MCF 10A (cell line): ENCODE measurements at regions of chr1 and their contacts with region 1.

Region 1: DNA sequence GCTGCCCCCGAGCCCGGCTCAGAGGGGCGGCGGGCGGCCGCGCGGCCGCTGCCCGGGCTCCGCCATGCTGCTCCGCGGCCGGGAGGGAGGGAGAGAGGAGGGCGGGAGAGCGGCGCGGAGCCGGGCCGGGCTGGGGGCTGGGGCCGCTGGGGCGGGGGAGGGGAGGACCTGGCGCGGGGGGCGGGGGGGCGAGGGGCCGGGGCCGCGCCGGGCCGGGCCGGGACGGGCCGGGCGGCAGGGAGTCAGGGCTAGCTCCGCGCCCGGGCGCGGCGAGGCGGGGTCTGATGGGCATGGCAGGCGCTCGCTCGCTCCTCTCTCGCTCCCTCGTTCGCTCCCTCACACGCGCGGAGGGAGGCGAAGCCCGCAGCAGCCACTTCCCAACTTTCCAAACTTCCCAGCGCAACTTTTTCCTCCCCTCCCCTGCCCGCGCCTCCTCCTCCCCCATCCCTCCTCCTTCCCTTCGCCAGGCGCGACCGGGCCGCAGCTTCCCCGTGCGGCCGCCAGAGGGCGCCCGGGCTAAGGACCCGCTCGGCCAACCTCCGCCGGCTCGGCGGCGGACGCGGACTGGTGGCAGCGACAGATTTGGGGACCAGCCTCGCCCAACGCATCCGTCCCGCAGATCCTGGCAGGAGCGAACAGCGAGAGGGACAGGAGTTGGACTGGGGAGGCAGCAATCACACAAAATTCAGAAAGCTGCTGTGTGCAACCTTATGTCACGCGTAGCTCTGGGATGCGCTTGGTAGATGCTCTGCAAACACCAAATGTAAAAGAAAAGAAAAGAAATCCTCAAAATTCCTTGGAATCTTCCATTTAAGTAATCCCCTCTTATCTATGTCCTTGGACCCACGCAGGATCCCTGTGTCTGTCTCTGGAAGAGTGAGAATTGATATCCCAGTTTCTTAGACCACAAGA is at the start of gene TRABD2B:
- DNase-seq: peak; percentile 74
- H3K4me3 Mint-ChIP-seq: peak within 1 kb of the TSS; percentile 78
- H3K27ac Mint-ChIP-seq: peak within 1 kb of the TSS; percentile 76
- H3K4me1 Mint-ChIP-seq: peaks cover 33% of the 10 kb centered on the region
- H3K27me3 Mint-ChIP-seq: no peaks in the 10 kb centered on the region
- CTCF ChIP-seq: peak; percentile 85
- total RNA-seq, gene TRABD2B: 0.96 and 2.6 TPM in 2 replicates

Region 2: GRCh38 chr1:47906009-47906432 is 91.5 kb before region 1 on chr1:
- CTCF ChIA-PET with region 1: no interaction called
- POLR2A ChIA-PET with region 1: no interaction called
- intact Hi-C with region 1: loop called (anchors 10 kb)
- DNase-seq: peak; percentile 77
- H3K4me3 Mint-ChIP-seq: no peak overlapping the region
- H3K27ac Mint-ChIP-seq: peak overlapping the region; percentile 76
- H3K4me1 Mint-ChIP-seq: peaks cover 40% of the 10 kb centered on the region
- H3K27me3 Mint-ChIP-seq: no peaks in the 10 kb centered on the region
- CTCF ChIP-seq: no peak

Region 3: GRCh38 chr1:48026275-48026674 is 28.7 kb after region 1 on chr1:
- CTCF ChIA-PET with region 1: interaction called, 65 read pairs
- POLR2A ChIA-PET with region 1: interaction called, 4 read pairs
- intact Hi-C with region 1: no loop called
- DNase-seq: peak; percentile 86
- H3K4me3 Mint-ChIP-seq: no peak overlapping the region
- H3K27ac Mint-ChIP-seq: peak overlapping the region; percentile 99
- H3K4me1 Mint-ChIP-seq: peaks cover 42% of the 10 kb centered on the region
- H3K27me3 Mint-ChIP-seq: no peaks in the 10 kb centered on the region
- CTCF ChIP-seq: no peak

Region 4: GRCh38 chr1:48061162-48062136 is 63.9 kb after region 1 on chr1:
- CTCF ChIA-PET with region 1: interaction called, 141 read pairs
- POLR2A ChIA-PET with region 1: interaction called, 11 read pairs
- intact Hi-C with region 1: loop called (anchors 1 kb)
- DNase-seq: peak; percentile 78
- H3K4me3 Mint-ChIP-seq: no peak overlapping the region
- H3K27ac Mint-ChIP-seq: no peak overlapping the region
- H3K4me1 Mint-ChIP-seq: no peaks in the 10 kb centered on the region
- H3K27me3 Mint-ChIP-seq: no peaks in the 10 kb centered on the region
- CTCF ChIP-seq: peak; percentile 82

Region 5: GRCh38 chr1:48123647-48124046 is 126.1 kb after region 1 on chr1:
- CTCF ChIA-PET with region 1: no interaction called
- POLR2A ChIA-PET with region 1: no interaction called
- intact Hi-C with region 1: no loop called
- DNase-seq: no peak
- H3K4me3 Mint-ChIP-seq: no peak overlapping the region
- H3K27ac Mint-ChIP-seq: no peak overlapping the region
- H3K4me1 Mint-ChIP-seq: peaks cover 25% of the 10 kb centered on the region
- H3K27me3 Mint-ChIP-seq: no peaks in the 10 kb centered on the region
- CTCF ChIP-seq: no peak

Region 6: GRCh38 chr1:48202030-48202752 is 204.6 kb after region 1 on chr1:
- CTCF ChIA-PET with region 1: interaction called, 3 read pairs
- POLR2A ChIA-PET with region 1: no interaction called
- intact Hi-C with region 1: loop called (anchors 5 kb)
- DNase-seq: peak; percentile 85
- H3K4me3 Mint-ChIP-seq: peak overlapping the region; percentile 25
- H3K27ac Mint-ChIP-seq: peak overlapping the region; percentile 78
- H3K4me1 Mint-ChIP-seq: peaks cover 54% of the 10 kb centered on the region
- H3K27me3 Mint-ChIP-seq: no peaks in the 10 kb centered on the region
- CTCF ChIP-seq: peak; percentile 75